ENCODE measurements at regions of chr11 and their contacts with region 1.

Region 1: GRCh38 chr11:62013591-62014476 is 46.4 kb upstream of the FTH1 start:
- DNase-seq: peak; percentile 96
- H3K4me3 Mint-ChIP-seq: peak overlapping the region; percentile 54
- H3K27ac Mint-ChIP-seq: peak overlapping the region; percentile 85
- H3K4me1 Mint-ChIP-seq: peaks cover 20% of the 10 kb centered on the region
- H3K27me3 Mint-ChIP-seq: no peaks in the 10 kb centered on the region
- CTCF ChIP-seq: no peak

Region 2: GRCh38 chr11:61978703-61979661 is 34.9 kb before region 1 on chr11:
- CTCF ChIA-PET with region 1: interaction called, 4 read pairs
- POLR2A ChIA-PET with region 1: interaction called, 298 read pairs
- intact Hi-C with region 1: no loop called
- DNase-seq: peak; percentile 59
- H3K4me3 Mint-ChIP-seq: no peak overlapping the region
- H3K27ac Mint-ChIP-seq: peak overlapping the region; percentile 84
- H3K4me1 Mint-ChIP-seq: peaks cover 33% of the 10 kb centered on the region
- H3K27me3 Mint-ChIP-seq: no peaks in the 10 kb centered on the region
- CTCF ChIP-seq: no peak

Region 3: GRCh38 chr11:61999141-61999975 is 14.5 kb before region 1 on chr11:
- CTCF ChIA-PET with region 1: no interaction called
- POLR2A ChIA-PET with region 1: interaction called, 10 read pairs
- intact Hi-C with region 1: no loop called
- DNase-seq: peak; percentile 74
- H3K4me3 Mint-ChIP-seq: no peak overlapping the region
- H3K27ac Mint-ChIP-seq: peak overlapping the region; percentile 96
- H3K4me1 Mint-ChIP-seq: peaks cover 6% of the 10 kb centered on the region
- H3K27me3 Mint-ChIP-seq: no peaks in the 10 kb centered on the region
- CTCF ChIP-seq: no peak

Region 4: DNA sequence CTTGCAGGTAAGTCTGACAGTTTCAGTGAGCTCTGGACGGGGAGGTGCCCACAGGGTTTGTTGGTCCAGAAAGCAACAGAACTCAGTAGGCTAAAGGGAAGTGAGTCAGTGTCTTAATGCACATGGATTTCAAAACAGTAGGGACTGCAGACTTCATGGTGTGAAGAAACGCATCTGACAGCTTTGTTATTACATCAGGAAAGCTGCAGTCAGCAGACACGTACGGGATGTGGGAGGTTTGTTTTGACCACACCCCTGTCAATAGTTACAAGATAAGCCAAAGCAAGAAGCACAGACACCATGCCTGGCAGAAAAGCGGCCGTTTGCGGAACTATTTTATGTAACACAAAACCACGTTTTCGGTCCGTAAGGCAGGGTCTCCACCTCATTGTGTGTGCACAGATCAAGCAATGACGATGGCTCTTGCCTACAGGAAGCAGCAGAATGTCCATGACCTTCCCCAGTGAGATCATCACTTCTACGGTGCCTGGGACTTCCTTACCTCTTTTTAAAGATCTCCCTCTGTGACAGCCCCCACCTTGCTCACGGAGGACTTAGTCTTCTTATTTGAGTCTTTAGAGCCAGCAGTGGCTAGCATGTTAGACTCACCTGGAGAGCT is 11.8 kb after region 1 on chr11:
- CTCF ChIA-PET with region 1: interaction called, 8 read pairs
- POLR2A ChIA-PET with region 1: interaction called, 70 read pairs
- intact Hi-C with region 1: loop called (anchors 1 kb)
- DNase-seq: peak; percentile 98
- H3K4me3 Mint-ChIP-seq: peak overlapping the region; percentile 58
- H3K27ac Mint-ChIP-seq: peak overlapping the region; percentile 97
- H3K4me1 Mint-ChIP-seq: peaks cover 34% of the 10 kb centered on the region
- H3K27me3 Mint-ChIP-seq: no peaks in the 10 kb centered on the region
- CTCF ChIP-seq: no peak

Region 5: GRCh38 chr11:62048065-62048464 is 34.2 kb after region 1 on chr11:
- CTCF ChIA-PET with region 1: no interaction called
- POLR2A ChIA-PET with region 1: interaction called, 41 read pairs
- intact Hi-C with region 1: loop called (anchors 5 kb)
- DNase-seq: peak; percentile 31
- H3K4me3 Mint-ChIP-seq: peak overlapping the region; percentile 31
- H3K27ac Mint-ChIP-seq: peak overlapping the region; percentile 77
- H3K4me1 Mint-ChIP-seq: peaks cover 35% of the 10 kb centered on the region
- H3K27me3 Mint-ChIP-seq: no peaks in the 10 kb centered on the region
- CTCF ChIP-seq: no peak

Region 6: GRCh38 chr11:62054484-62055121 is 40.8 kb after region 1 on chr11:
- CTCF ChIA-PET with region 1: no interaction called
- POLR2A ChIA-PET with region 1: interaction called, 5 read pairs
- intact Hi-C with region 1: loop called (anchors 5 kb)
- DNase-seq: peak; percentile 93
- H3K4me3 Mint-ChIP-seq: peak overlapping the region; percentile 26
- H3K27ac Mint-ChIP-seq: peak overlapping the region; percentile 75
- H3K4me1 Mint-ChIP-seq: peaks cover 18% of the 10 kb centered on the region
- H3K27me3 Mint-ChIP-seq: no peaks in the 10 kb centered on the region
- CTCF ChIP-seq: peak; percentile 81

Region 7: DNA sequence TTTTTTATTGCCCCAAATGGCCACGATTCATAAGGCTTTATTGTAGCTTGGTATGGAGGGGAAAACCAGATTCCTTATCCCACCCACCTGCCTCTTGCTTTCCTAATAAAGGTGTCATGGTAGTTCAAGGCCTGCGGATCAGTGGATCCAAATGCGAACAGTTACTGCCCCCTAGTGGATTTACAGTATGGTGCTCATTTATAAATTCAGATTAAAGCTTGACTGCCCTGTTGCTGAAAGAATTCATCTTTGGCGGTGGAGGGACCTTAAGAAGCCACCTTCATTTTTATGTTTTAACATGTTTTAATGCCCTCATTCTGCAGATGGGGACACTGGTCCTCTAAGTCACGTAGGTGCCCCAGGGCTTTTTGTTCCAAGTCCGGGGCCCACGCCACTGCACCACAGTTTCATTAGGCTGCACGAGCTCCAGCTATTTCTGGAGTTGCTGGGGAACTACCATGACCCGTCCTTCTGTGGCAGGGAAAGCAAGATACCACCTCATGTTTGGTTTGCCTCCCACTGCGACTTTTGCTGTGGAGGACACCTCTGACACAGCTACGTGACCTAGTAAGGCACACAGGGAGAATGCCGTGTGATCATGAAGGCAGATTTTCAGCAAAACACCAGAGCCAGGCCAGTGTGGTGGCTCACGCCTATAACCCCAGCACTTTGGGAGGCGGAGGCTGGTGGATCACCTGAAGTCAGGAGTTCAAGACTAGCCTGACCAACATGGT is 94.3 kb after region 1 on chr11:
- CTCF ChIA-PET with region 1: no interaction called
- POLR2A ChIA-PET with region 1: no interaction called
- intact Hi-C with region 1: no loop called
- DNase-seq: peak; percentile 69
- H3K4me3 Mint-ChIP-seq: no peak overlapping the region
- H3K27ac Mint-ChIP-seq: no peak overlapping the region
- H3K4me1 Mint-ChIP-seq: no peaks in the 10 kb centered on the region
- H3K27me3 Mint-ChIP-seq: no peaks in the 10 kb centered on the region
- CTCF ChIP-seq: peak; percentile 79

Measured in MCF 10A (cell line).